T-cell (primary cell): ENCODE measurements at regions of chr2 and their contacts with region 1.

Region 1: DNA sequence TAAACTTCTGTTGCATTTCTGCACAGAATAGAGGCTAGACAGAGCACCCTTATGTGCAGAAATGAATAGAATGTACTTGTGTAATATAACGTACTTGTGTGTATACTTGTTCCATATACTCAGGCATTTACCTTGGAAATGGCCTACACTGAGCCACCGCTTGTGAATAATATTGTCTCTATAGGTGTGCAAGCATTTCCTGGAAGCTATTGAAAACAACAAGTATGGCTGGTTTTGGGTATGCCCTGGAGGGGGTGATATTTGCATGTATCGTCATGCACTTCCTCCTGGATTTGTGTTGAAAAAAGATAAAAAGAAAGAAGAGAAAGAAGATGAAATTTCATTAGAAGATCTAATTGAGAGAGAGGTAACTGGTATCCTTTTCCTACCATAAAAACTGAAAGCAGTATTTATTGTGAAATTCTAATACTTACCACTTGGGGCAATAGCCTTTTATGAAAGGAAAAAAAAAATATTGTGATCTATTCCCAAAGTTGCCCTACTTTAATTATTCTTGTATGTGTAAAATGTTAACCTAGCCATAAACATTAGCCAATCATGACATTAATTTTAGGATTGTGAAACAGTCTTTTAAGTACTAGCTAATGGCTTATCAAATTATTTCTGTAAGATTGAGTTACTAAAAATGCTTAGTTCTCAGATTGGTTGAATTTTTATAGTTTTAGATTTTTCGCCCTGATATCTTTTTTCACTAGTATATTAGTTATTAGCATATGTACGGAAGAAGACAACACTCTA is 18.0 kb downstream of the ZC3H15 start:
- DNase-seq: peak in 1 of 35 experiments; percentile 37
- ATAC-seq: peak in 1 of 4 experiments; percentile 53
- H3K4me3 ChIP-seq: no peak overlapping the region
- H3K4me3 Mint-ChIP-seq: no peak overlapping the region
- H3K27ac ChIP-seq: no peak overlapping the region
- H3K27ac Mint-ChIP-seq: peak overlapping the region; percentile 33 to 75
- H3K4me1 ChIP-seq: no peaks in the 10 kb centered on the region
- H3K4me1 Mint-ChIP-seq: peaks cover 7 to 17% (median 15%) of the 10 kb centered on the region in 3 donors
- H3K27me3 ChIP-seq: no peaks in the 10 kb centered on the region
- H3K27me3 Mint-ChIP-seq: no peaks in the 10 kb centered on the region

Region 2: DNA sequence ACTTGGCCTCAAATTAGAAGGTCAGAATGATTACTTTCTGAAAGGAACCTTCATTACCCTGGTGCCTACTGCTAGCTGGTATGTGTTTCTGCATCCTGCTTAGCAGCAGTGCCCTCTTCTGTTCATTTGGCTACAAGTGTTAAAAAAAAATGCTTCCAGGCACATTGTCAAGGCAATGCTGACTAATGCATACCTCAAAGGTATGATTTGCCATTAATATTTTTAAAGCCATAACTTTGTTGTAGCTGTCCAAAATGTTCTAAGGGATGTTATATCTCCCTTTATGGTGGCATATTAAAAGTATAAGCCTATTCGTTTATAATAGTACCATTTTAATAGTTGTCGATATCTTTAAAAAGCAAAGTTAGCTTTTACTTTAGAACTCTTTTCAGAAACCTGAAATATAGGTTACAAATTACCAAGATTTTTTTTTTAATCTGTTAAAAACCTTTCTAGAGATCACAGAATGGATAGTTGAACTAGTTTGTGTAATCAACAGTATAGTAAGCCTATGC is 137.8 kb after region 1 on chr2:
- CTCF ChIA-PET with region 1: interaction called, 33 to 44 read pairs
- POLR2A ChIA-PET with region 1: no interaction called
- DNase-seq: peak in 20 of 35 experiments; percentile 1 to 63 (median 7)
- ATAC-seq: peak; percentile 48 to 66 (median 62)
- H3K4me3 ChIP-seq: no peak overlapping the region
- H3K4me3 Mint-ChIP-seq: no peak overlapping the region
- H3K27ac ChIP-seq: no peak overlapping the region
- H3K27ac Mint-ChIP-seq: no peak overlapping the region
- H3K4me1 ChIP-seq: no peaks in the 10 kb centered on the region
- H3K4me1 Mint-ChIP-seq: peaks cover 0 to 6% (median 0%) of the 10 kb centered on the region in 3 donors
- H3K27me3 ChIP-seq: no peaks in the 10 kb centered on the region
- H3K27me3 Mint-ChIP-seq: no peaks in the 10 kb centered on the region